GM12878 (cell line): ENCODE measurements at regions of chr22 and their contacts with region 1.

Region 1: GRCh38 chr22:40922484-40923303 is 28.5 kb upstream of the RBX1 start:
- DNase-seq: peak; percentile 47
- ATAC-seq: peak; percentile 88
- H3K4me3 ChIP-seq: no peak overlapping the region
- H3K27ac ChIP-seq: no peak overlapping the region
- H3K4me1 ChIP-seq: no peaks in the 10 kb centered on the region
- H3K27me3 ChIP-seq: no peaks in the 10 kb centered on the region
- CTCF ChIP-seq: peak; percentile 41 to 67 (median 56); a peak in 5 of 6 replicates
- EP300 ChIP-seq: no peak
- POLR2A ChIP-seq: no peak
- RAD21 ChIP-seq: peak; percentile 84

Region 2: GRCh38 chr22:40449676-40450035 is 473.0 kb before region 1 on chr22:
- CTCF ChIA-PET with region 1: no interaction called
- POLR2A ChIA-PET with region 1: no interaction called
- RAD21 ChIA-PET with region 1: no interaction called
- SMC1A ChIA-PET with region 1: no interaction called
- in situ Hi-C with region 1: no loop called
- intact Hi-C with region 1: no loop called
- DNase-seq: no peak
- ATAC-seq: no peak
- H3K4me3 ChIP-seq: no peak overlapping the region
- H3K27ac ChIP-seq: no peak overlapping the region
- H3K4me1 ChIP-seq: peaks cover 3% of the 10 kb centered on the region; the same call in 1 of the 2 replicates
- H3K27me3 ChIP-seq: no peaks in the 10 kb centered on the region
- CTCF ChIP-seq: no peak
- EP300 ChIP-seq: no peak
- POLR2A ChIP-seq: no peak
- RAD21 ChIP-seq: no peak

Region 3: GRCh38 chr22:40911772-40912171 is 10.9 kb before region 1 on chr22:
- CTCF ChIA-PET with region 1: interaction called, 16 read pairs
- POLR2A ChIA-PET with region 1: no interaction called
- RAD21 ChIA-PET with region 1: interaction called, 11 read pairs
- SMC1A ChIA-PET with region 1: interaction called, 20 read pairs
- in situ Hi-C with region 1: no loop called
- intact Hi-C with region 1: no loop called
- DNase-seq: no peak
- ATAC-seq: no peak
- H3K4me3 ChIP-seq: no peak overlapping the region
- H3K27ac ChIP-seq: no peak overlapping the region
- H3K4me1 ChIP-seq: no peaks in the 10 kb centered on the region
- H3K27me3 ChIP-seq: no peaks in the 10 kb centered on the region
- CTCF ChIP-seq: no peak
- EP300 ChIP-seq: no peak
- POLR2A ChIP-seq: no peak
- RAD21 ChIP-seq: no peak

Region 4: GRCh38 chr22:41038732-41039445 is 116.2 kb after region 1 on chr22:
- CTCF ChIA-PET with region 1: no interaction called
- POLR2A ChIA-PET with region 1: no interaction called
- RAD21 ChIA-PET with region 1: no interaction called
- SMC1A ChIA-PET with region 1: no interaction called
- in situ Hi-C with region 1: no loop called
- intact Hi-C with region 1: no loop called
- DNase-seq: no peak
- ATAC-seq: no peak
- H3K4me3 ChIP-seq: no peak overlapping the region
- H3K27ac ChIP-seq: no peak overlapping the region
- H3K4me1 ChIP-seq: no peaks in the 10 kb centered on the region
- H3K27me3 ChIP-seq: no peaks in the 10 kb centered on the region
- CTCF ChIP-seq: no peak
- EP300 ChIP-seq: no peak
- POLR2A ChIP-seq: no peak
- RAD21 ChIP-seq: no peak

Region 5: GRCh38 chr22:41091132-41092022 is 168.7 kb after region 1 on chr22:
- CTCF ChIA-PET with region 1: interaction called, 13 read pairs
- POLR2A ChIA-PET with region 1: interaction called, 8 read pairs
- RAD21 ChIA-PET with region 1: interaction called, 23 read pairs
- SMC1A ChIA-PET with region 1: interaction called, 13 read pairs
- in situ Hi-C with region 1: no loop called
- intact Hi-C with region 1: no loop called
- DNase-seq: peak; percentile 92
- ATAC-seq: peak; percentile 88
- H3K4me3 ChIP-seq: peak overlapping the region; percentile 95
- H3K27ac ChIP-seq: peak overlapping the region; percentile 98
- H3K4me1 ChIP-seq: no peaks in the 10 kb centered on the region; the same call in 1 of the 2 replicates
- H3K27me3 ChIP-seq: no peaks in the 10 kb centered on the region
- CTCF ChIP-seq: no peak
- EP300 ChIP-seq: no peak; a peak in 1 of 4 replicates
- POLR2A ChIP-seq: peak; percentile 90
- RAD21 ChIP-seq: no peak

Region 6: DNA sequence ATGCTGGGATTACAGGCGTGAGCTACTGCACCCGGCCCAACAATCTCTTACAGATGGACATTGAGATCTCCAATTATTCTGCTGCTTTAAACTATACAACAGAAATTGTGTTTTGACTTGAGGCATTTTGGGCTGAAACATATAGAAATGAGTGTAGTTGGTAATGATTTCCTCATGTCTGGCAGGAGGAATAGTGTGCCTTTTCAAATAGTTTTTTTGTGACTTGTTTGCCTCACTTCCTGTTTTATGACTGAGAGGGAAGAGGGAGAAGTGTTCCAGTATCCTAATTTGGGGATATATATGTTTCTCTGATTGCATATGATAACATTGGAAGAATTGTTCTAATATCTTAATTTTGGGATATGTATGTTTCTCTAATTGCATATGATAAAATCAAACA is 209.9 kb after region 1 on chr22:
- CTCF ChIA-PET with region 1: interaction called, 19 read pairs
- POLR2A ChIA-PET with region 1: interaction called, 8 read pairs
- RAD21 ChIA-PET with region 1: interaction called, 10 read pairs
- SMC1A ChIA-PET with region 1: interaction called, 4 read pairs
- in situ Hi-C with region 1: no loop called
- intact Hi-C with region 1: no loop called
- DNase-seq: no peak
- ATAC-seq: no peak
- H3K4me3 ChIP-seq: no peak overlapping the region
- H3K27ac ChIP-seq: no peak overlapping the region
- H3K4me1 ChIP-seq: no peaks in the 10 kb centered on the region
- H3K27me3 ChIP-seq: no peaks in the 10 kb centered on the region
- CTCF ChIP-seq: no peak
- EP300 ChIP-seq: no peak
- POLR2A ChIP-seq: no peak
- RAD21 ChIP-seq: no peak

Region 7: DNA sequence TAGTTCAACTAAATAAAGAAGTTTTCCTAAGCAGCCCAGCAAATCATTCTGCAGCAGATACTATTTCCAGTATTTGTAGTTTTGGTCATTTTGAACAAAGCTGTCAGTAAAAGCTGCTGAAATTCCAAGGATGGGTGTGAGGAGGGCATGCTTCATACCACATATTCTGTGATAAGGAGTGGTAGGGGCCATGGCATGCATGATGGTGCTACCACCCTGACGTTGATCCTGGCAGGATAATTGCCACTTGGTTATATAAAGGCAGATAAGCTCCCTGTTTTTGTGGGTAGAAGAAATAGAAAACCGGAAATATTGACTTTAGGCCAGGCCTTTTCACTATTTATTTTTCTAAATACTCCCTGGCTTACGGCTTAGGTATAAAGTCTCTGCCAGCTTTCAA is 249.3 kb after region 1 on chr22:
- CTCF ChIA-PET with region 1: interaction called, 15 read pairs
- POLR2A ChIA-PET with region 1: no interaction called
- RAD21 ChIA-PET with region 1: interaction called, 4 read pairs
- SMC1A ChIA-PET with region 1: interaction called, 9 read pairs
- in situ Hi-C with region 1: no loop called
- intact Hi-C with region 1: no loop called
- DNase-seq: no peak
- ATAC-seq: no peak
- H3K4me3 ChIP-seq: no peak overlapping the region
- H3K27ac ChIP-seq: no peak overlapping the region
- H3K4me1 ChIP-seq: no peaks in the 10 kb centered on the region
- H3K27me3 ChIP-seq: no peaks in the 10 kb centered on the region
- CTCF ChIP-seq: no peak
- EP300 ChIP-seq: no peak
- POLR2A ChIP-seq: no peak
- RAD21 ChIP-seq: no peak

Region 8: GRCh38 chr22:41285820-41286638 is 363.3 kb after region 1 on chr22 and contains the start of gene RANGAP1:
- CTCF ChIA-PET with region 1: interaction called, 7 read pairs
- POLR2A ChIA-PET with region 1: no interaction called
- RAD21 ChIA-PET with region 1: interaction called, 12 read pairs
- SMC1A ChIA-PET with region 1: interaction called, 4 read pairs
- in situ Hi-C with region 1: no loop called
- intact Hi-C with region 1: no loop called
- DNase-seq: peak; percentile 98
- ATAC-seq: peak; percentile 98
- H3K4me3 ChIP-seq: peak within 1 kb of the TSS; percentile 96
- H3K27ac ChIP-seq: peak within 1 kb of the TSS; percentile 81
- H3K4me1 ChIP-seq: peaks cover 7% of the 10 kb centered on the region
- H3K27me3 ChIP-seq: no peaks in the 10 kb centered on the region
- CTCF ChIP-seq: peak in 2 of 3 experiments; percentile 8 to 15; a peak in 1 of 6 replicates
- EP300 ChIP-seq: peak; percentile 21 to 46; a peak in 1 of 4 replicates
- POLR2A ChIP-seq: peak; percentile 92
- RAD21 ChIP-seq: no peak
- polyA plus RNA-seq, gene RANGAP1: 2.5 to 9.1 TPM